ENCODE measurements at regions of chr7 and their contacts with region 1.

Region 1: GRCh38 chr7:92447345-92448204 is at the start of gene GATAD1:
- DNase-seq: peak; percentile 80 to 91
- ATAC-seq: peak; percentile 84 to 94 (median 89)
- H3K4me3 ChIP-seq: peak within 1 kb of the TSS; percentile 92
- H3K4me3 Mint-ChIP-seq: peak within 1 kb of the TSS; percentile 93
- H3K27ac ChIP-seq: peak within 1 kb of the TSS; percentile 97
- H3K27ac Mint-ChIP-seq: peak within 1 kb of the TSS; percentile 90 to 98
- H3K4me1 ChIP-seq: peaks cover 6% of the 10 kb centered on the region
- H3K4me1 Mint-ChIP-seq: peaks cover 6 to 9% of the 10 kb centered on the region in 2 donors
- H3K27me3 ChIP-seq: no peaks in the 10 kb centered on the region
- H3K27me3 Mint-ChIP-seq: no peaks in the 10 kb centered on the region
- CTCF ChIP-seq: peak; percentile 29
- total RNA-seq, gene GATAD1: 32.5 to 43.3 (median 35.0) TPM

Region 2: DNA sequence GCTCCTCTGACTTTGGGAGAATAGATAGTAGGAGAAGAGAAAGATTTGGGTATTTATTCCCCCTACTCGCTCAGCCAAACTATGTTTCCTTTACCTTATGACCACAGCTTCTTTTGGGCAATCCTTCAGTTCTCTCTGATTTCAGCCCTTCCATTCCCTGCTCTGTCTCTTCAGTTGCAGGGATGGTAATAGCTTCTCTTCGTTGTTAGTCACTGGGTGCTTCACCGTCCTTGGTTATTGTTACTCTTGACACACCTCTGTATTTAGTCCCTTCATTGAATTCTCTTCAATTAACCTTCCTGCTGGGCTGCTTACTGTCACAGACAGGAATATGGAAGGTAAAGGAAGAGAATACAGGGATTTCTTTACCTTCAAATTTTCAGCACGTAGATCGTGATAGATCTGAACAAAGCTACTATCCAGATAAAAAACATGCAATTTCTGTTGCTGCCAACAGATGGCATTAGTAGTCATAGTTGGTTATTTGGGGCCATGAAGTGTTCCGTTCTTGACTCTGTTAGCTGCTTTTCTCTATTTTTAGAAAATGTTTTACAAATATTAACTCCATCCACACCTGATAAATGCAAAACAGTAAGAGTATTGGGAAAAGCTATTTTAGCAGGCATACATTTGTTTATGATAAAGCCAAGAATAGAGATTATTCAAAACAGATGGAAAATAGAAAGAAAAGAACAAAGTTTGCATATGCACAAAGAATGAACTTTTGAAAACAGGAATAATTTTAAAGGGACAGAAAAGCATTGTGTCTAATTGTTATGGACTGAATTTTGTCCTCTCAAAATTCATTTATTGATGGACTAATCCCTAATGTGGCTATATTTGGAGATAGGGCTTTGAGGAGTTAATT is 1992.2 kb before region 1 on chr7:
- intact Hi-C with region 1: loop called (anchors 5 kb)
- DNase-seq: peak in 1 of 2 donors; percentile 61
- ATAC-seq: peak in 2 of 3 donors; percentile 59 to 65
- H3K4me3 ChIP-seq: no peak overlapping the region
- H3K4me3 Mint-ChIP-seq: no peak overlapping the region
- H3K27ac ChIP-seq: no peak overlapping the region
- H3K27ac Mint-ChIP-seq: no peak overlapping the region
- H3K4me1 ChIP-seq: no peaks in the 10 kb centered on the region
- H3K4me1 Mint-ChIP-seq: peaks cover 7 to 8% of the 10 kb centered on the region in 2 donors
- H3K27me3 ChIP-seq: peaks cover 3% of the 10 kb centered on the region
- H3K27me3 Mint-ChIP-seq: peaks cover 19 to 28% of the 10 kb centered on the region in 2 donors
- CTCF ChIP-seq: peak; percentile 68

Region 3: GRCh38 chr7:91880413-91881241 is 566.9 kb before region 1 on chr7 and contains the start of gene MTERF1:
- intact Hi-C with region 1: loop called (anchors 5 kb)
- DNase-seq: peak; percentile 89 to 97
- ATAC-seq: peak; percentile 96 to 99 (median 99)
- H3K4me3 ChIP-seq: peak within 1 kb of the TSS; percentile 82
- H3K4me3 Mint-ChIP-seq: peak within 1 kb of the TSS; percentile 97
- H3K27ac ChIP-seq: peak within 1 kb of the TSS; percentile 65
- H3K27ac Mint-ChIP-seq: peak within 1 kb of the TSS; percentile 88 to 96
- H3K4me1 ChIP-seq: peaks cover 14% of the 10 kb centered on the region
- H3K4me1 Mint-ChIP-seq: peaks cover 32 to 37% of the 10 kb centered on the region in 2 donors
- H3K27me3 ChIP-seq: no peaks in the 10 kb centered on the region
- H3K27me3 Mint-ChIP-seq: peaks cover 3 to 22% of the 10 kb centered on the region in 2 donors
- CTCF ChIP-seq: peak; percentile 96
- total RNA-seq, gene MTERF1: 15.7 to 20.0 (median 19.0) TPM

Region 4: GRCh38 chr7:92134271-92135051 is 313.1 kb before region 1 on chr7 and contains the start of gene CYP51A1:
- intact Hi-C with region 1: loop called (anchors 1 kb)
- DNase-seq: peak; percentile 95 to 98
- ATAC-seq: peak; percentile 83 to 95 (median 84)
- H3K4me3 ChIP-seq: peak within 1 kb of the TSS; percentile 75
- H3K4me3 Mint-ChIP-seq: peak within 1 kb of the TSS; percentile 98
- H3K27ac ChIP-seq: peak within 1 kb of the TSS; percentile 91
- H3K27ac Mint-ChIP-seq: peak within 1 kb of the TSS; percentile 99
- H3K4me1 ChIP-seq: peaks cover 14% of the 10 kb centered on the region
- H3K4me1 Mint-ChIP-seq: peaks cover 36% of the 10 kb centered on the region in 2 donors
- H3K27me3 ChIP-seq: no peaks in the 10 kb centered on the region
- H3K27me3 Mint-ChIP-seq: no peaks in the 10 kb centered on the region
- CTCF ChIP-seq: no peak
- total RNA-seq, gene CYP51A1: 37.2 to 53.0 (median 49.3) TPM

Region 5: DNA sequence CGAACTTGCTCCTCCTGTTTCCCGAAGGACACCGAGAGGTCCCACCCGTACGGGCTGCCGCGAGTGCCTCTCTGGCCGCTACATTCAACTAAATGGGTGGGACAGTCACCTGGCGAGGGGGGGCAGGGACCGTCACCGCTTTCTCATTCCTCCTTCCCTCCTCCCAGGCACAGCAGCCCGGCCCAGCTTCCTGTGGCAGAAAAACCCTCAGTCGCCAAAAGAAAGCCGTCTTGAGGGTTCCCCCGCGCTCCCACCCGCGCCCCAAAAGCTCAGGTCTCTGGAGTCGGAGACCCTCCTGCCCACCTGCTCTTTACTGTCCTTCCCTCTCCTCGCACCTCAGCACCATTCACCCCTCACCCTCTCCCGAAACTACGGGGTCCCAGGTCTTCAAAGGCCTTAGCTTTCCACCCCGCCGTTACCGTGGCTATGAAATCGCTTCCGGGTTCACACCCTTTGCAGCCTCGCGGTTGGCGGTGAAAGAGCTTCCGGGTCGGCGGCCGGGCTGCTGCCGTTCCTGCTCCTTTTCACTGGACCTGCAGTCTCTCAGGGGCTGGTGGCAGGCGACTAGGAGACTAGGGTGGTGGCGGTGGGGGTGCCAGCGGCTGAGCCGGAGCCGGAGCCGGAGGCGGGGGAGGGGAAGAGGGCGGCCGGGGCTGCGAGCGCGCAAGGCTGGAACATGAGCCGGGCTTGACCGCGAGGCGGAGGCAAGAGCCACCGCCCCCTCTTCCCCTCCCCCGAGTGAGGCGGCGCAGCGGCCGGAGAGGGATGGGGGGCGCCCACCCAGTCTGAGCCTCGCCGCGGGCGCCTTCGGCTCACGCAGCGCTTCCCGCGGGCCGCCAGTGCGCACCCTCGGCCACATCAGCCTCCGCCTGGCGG is 201.8 kb before region 1 on chr7 and contains the starts of genes ANKIB1 and KRIT1:
- intact Hi-C with region 1: loop called (anchors 1 kb)
- DNase-seq: peak; percentile 82 to 93
- ATAC-seq: peak; percentile 75 to 85 (median 81)
- H3K4me3 ChIP-seq: peak within 1 kb of the TSS; percentile 74
- H3K4me3 Mint-ChIP-seq: peak within 1 kb of the TSS; percentile 100
- H3K27ac ChIP-seq: peak within 1 kb of the TSS; percentile 92
- H3K27ac Mint-ChIP-seq: peak within 1 kb of the TSS; percentile 99
- H3K4me1 ChIP-seq: peaks cover 11% of the 10 kb centered on the region
- H3K4me1 Mint-ChIP-seq: peaks cover 39 to 45% of the 10 kb centered on the region in 2 donors
- H3K27me3 ChIP-seq: no peaks in the 10 kb centered on the region
- H3K27me3 Mint-ChIP-seq: no peaks in the 10 kb centered on the region
- CTCF ChIP-seq: no peak
- total RNA-seq, gene ANKIB1: 70.6 to 90.2 (median 86.6) TPM
- total RNA-seq, gene KRIT1: 55.4 to 76.7 (median 62.6) TPM

Region 6: DNA sequence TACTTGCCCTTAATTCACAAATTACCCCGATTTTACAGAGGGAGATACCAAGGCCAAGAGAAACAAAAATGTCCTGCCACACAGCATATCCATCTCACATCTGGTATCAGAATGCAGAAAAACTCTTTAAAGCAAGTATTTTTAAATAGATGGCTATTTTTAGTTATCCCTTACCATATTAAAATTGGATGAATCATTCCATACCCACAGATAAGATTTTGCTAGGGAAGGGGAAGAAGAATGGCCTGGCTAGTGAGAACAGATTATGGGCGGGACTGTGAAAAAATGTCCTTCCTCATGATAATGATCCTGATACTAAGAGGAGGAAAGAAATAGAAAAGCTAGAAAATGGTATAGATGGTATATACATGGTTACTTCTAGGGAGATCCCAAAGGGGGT is 80.8 kb before region 1 on chr7:
- intact Hi-C with region 1: no loop called
- DNase-seq: no peak
- ATAC-seq: no peak
- H3K4me3 ChIP-seq: no peak overlapping the region
- H3K4me3 Mint-ChIP-seq: no peak overlapping the region
- H3K27ac ChIP-seq: no peak overlapping the region
- H3K27ac Mint-ChIP-seq: no peak overlapping the region
- H3K4me1 ChIP-seq: no peaks in the 10 kb centered on the region
- H3K4me1 Mint-ChIP-seq: no peaks in the 10 kb centered on the region
- H3K27me3 ChIP-seq: no peaks in the 10 kb centered on the region
- H3K27me3 Mint-ChIP-seq: no peaks in the 10 kb centered on the region
- CTCF ChIP-seq: no peak

Region 7: GRCh38 chr7:92489634-92490033 is 42.1 kb after region 1 on chr7:
- intact Hi-C with region 1: no loop called
- DNase-seq: no peak
- ATAC-seq: no peak
- H3K4me3 ChIP-seq: no peak overlapping the region
- H3K4me3 Mint-ChIP-seq: no peak overlapping the region
- H3K27ac ChIP-seq: no peak overlapping the region
- H3K27ac Mint-ChIP-seq: no peak overlapping the region
- H3K4me1 ChIP-seq: no peaks in the 10 kb centered on the region
- H3K4me1 Mint-ChIP-seq: no peaks in the 10 kb centered on the region
- H3K27me3 ChIP-seq: no peaks in the 10 kb centered on the region
- H3K27me3 Mint-ChIP-seq: no peaks in the 10 kb centered on the region
- CTCF ChIP-seq: no peak

Region 8: DNA sequence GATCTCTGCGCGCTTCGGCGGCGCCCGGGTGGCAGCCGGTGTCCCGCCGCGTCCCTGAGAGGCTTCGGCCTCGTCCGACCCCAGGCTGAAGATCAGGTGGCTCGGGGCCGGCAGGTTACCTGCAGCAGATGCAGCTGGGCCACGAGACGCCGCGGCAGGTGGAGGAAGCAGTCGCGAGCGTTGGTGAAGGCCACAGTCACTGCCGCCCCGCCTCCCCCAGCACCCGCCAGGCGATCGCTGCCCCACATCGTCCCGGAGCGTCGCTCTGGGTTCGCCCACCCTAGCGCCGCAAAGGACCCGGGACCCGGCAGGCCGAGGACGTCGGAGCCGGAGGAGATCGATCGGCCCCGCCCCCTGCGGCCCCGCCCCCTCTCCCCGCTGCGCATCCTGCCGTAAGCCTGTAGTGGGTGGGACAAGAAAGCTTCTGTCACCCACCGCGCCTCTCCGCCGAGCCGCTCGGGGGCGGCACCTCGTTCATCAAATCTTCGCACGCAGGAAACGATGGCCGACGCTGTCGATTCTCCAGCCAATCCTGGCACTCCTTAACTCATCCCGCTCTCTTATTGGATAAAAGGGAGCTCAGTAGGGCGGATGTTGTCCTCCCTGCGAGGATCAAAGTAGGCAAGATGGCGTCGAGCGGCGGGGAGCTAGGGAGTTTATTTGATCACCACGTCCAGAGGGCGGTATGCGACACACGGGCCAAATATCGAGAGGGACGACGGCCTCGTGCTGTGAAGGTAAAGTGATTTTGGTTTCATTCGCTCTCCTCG is 80.8 kb after region 1 on chr7 and contains the starts of genes PEX1 and RBM48:
- intact Hi-C with region 1: loop called (anchors 1 kb)
- DNase-seq: peak; percentile 89 to 98
- ATAC-seq: peak; percentile 91 to 97 (median 92)
- H3K4me3 ChIP-seq: peak within 1 kb of the TSS; percentile 67
- H3K4me3 Mint-ChIP-seq: peak within 1 kb of the TSS; percentile 97
- H3K27ac ChIP-seq: peak within 1 kb of the TSS; percentile 79
- H3K27ac Mint-ChIP-seq: peak within 1 kb of the TSS; percentile 90 to 97
- H3K4me1 ChIP-seq: peaks cover 3% of the 10 kb centered on the region
- H3K4me1 Mint-ChIP-seq: peaks cover 22 to 31% of the 10 kb centered on the region in 2 donors
- H3K27me3 ChIP-seq: no peaks in the 10 kb centered on the region
- H3K27me3 Mint-ChIP-seq: no peaks in the 10 kb centered on the region
- CTCF ChIP-seq: peak; percentile 28
- total RNA-seq, gene PEX1: 22.8 to 26.7 (median 26.2) TPM
- total RNA-seq, gene RBM48: 32.2 to 42.4 (median 35.7) TPM